A673 (cell line): ENCODE measurements at regions of chr13 and their contacts with region 1.

Region 1: GRCh38 chr13:25561812-25562211 is 190.0 kb downstream of the ATP8A2 start:
- DNase-seq: no peak
- H3K4me3 ChIP-seq: no peak overlapping the region
- H3K27ac ChIP-seq: no peak overlapping the region
- H3K4me1 ChIP-seq: no peaks in the 10 kb centered on the region
- H3K27me3 ChIP-seq: no peaks in the 10 kb centered on the region
- CTCF ChIP-seq: no peak

Region 2: DNA sequence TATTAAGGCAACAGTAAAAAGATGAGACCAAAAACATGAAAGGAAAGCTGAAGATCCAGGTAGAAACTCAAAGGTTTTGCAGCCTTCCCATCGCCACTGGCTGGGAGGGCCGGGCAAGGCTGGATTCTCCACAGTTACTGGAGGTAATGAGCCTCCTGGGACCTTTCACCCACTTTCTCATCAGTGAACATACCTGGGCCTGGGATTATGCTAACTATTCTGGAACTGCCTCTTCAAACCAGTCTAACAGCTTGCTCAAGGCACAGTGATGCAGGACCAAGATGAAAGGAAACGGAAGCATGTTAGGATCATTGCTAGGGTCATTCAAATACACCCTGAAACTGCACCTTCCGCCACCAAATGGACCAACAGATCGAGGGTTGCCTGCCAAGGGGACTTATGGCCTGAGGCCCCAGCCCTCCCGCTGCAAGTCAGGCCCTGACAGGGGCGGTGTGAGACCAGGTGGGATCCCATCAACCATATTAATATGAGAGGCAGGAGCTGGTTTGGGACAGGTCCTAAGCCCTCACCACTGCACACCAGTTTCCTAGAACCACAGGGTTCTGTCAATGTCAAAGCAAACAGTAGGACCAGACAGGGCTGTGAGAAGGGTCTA is 910.0 kb before region 1 on chr13:
- CTCF ChIA-PET with region 1: no interaction called
- POLR2A ChIA-PET with region 1: no interaction called
- intact Hi-C with region 1: no loop called
- DNase-seq: no peak
- H3K4me3 ChIP-seq: no peak overlapping the region
- H3K27ac ChIP-seq: no peak overlapping the region
- H3K4me1 ChIP-seq: no peaks in the 10 kb centered on the region
- H3K27me3 ChIP-seq: no peaks in the 10 kb centered on the region
- CTCF ChIP-seq: no peak

Region 3: GRCh38 chr13:25963674-25964073 is 401.9 kb after region 1 on chr13:
- CTCF ChIA-PET with region 1: interaction called, 13 read pairs
- POLR2A ChIA-PET with region 1: no interaction called
- intact Hi-C with region 1: no loop called
- DNase-seq: peak; percentile 39
- H3K4me3 ChIP-seq: no peak overlapping the region
- H3K27ac ChIP-seq: no peak overlapping the region
- H3K4me1 ChIP-seq: peaks cover 6% of the 10 kb centered on the region
- H3K27me3 ChIP-seq: no peaks in the 10 kb centered on the region
- CTCF ChIP-seq: no peak